BJ (cell line): ENCODE measurements at regions of chr15 and their contacts with region 1.

Region 1: GRCh38 chr15:80494351-80494751 is 90.2 kb downstream of the ARNT2 start:
- DNase-seq: no peak
- H3K4me3 ChIP-seq: no peak overlapping the region
- H3K27me3 ChIP-seq: no peaks in the 10 kb centered on the region
- CTCF ChIP-seq: no peak

Region 2: DNA sequence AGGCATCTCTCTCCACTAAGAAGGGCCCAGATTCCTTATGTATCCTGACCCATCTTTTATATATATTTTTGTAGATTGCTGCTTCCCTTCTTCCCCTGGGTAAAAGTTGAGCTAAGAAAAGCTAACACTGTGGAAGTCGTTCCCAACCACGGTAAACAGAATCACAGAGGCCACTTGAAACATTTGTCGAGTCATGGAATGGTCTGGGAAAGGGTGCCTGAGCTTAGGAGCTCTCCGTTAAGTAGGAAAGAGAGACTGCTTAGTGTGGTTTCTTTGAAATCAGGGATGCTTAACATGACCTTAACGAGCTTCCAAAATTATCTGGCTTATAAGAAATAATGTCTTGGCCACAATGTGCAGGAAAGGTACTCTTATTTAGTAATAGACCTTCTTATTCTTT is 44.5 kb before region 1 on chr15:
- CTCF ChIA-PET with region 1: no interaction called
- POLR2A ChIA-PET with region 1: no interaction called
- DNase-seq: no peak
- H3K4me3 ChIP-seq: no peak overlapping the region
- H3K27me3 ChIP-seq: no peaks in the 10 kb centered on the region
- CTCF ChIP-seq: no peak

Region 3: DNA sequence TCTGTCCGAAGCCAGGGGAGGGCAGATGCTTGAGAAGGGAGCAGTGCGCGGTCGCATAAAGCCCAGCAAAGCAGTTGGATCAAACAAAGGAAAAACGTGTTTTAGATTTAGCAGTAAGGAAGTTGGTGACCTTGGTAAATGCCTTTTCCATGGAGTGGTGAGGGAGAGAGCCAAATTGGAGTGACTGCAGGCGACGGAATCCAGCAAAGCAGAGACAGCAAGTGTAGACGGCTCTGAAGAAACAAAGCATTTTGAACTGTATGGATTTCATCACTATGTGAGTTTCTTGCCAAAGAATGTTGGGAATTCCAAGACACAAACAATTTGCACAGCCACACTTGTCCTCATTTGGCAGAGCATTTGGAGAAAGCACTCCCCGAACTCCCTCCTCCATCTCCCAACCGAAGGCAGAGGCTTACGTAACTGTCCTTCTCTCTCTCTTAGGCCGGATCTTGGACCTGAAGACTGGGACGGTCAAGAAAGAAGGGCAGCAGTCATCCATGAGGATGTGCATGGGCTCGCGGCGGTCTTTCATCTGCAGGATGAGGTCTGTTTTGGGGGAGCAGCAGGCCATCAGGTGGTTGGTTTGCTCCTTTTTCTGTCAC is 13.5 kb after region 1 on chr15:
- CTCF ChIA-PET with region 1: interaction called, 13 read pairs
- POLR2A ChIA-PET with region 1: interaction called, 5 read pairs
- DNase-seq: peak; percentile 99
- H3K4me3 ChIP-seq: no peak overlapping the region; the same call in 1 of the 2 replicates
- H3K27me3 ChIP-seq: no peaks in the 10 kb centered on the region
- CTCF ChIP-seq: no peak